A673 (cell line): ENCODE measurements at regions of chr1 and their contacts with region 1.

Region 1: DNA sequence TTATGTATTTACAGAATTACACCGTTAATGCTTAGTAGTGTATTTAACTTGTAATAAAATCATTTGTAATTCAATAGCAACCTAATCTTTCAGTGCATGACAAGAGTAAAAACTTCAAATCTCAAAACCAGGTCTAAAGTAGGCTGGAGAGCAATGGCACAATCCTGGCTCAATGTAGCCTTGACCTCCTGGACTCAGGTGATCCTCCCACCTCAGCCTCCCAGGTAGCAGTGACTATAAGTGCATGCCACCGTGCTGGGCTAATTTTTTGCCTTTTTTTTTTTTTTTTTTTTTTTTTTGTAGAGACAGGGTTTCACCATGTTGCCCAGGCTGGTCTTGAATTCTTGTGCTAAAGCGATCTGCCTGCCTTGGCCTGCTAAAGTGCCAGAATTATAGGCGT is 11.3 kb downstream of the IPP start:
- DNase-seq: no peak
- H3K4me3 ChIP-seq: no peak overlapping the region
- H3K27ac ChIP-seq: no peak overlapping the region
- H3K4me1 ChIP-seq: no peaks in the 10 kb centered on the region
- H3K27me3 ChIP-seq: no peaks in the 10 kb centered on the region
- CTCF ChIP-seq: no peak

Region 2: DNA sequence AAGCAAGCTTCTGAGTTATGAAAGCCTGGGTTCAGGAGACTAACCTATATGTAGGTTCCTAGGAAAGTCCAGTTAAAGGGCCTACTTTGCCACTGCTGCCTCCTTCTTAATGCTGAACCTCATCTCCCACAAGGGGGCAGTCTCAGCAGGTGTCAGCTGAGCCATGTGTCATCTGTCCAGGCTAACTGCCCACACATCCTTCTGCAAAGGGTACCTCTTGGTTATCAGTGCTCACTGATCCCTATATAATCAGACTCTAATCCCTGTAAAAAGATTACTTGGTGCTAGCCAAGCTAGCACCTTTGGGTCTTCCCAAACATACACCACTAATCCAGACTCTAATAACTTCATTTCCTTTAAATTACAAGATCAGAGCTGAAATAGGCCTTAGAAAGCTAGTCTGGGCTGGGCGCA is 226.5 kb before region 1 on chr1:
- CTCF ChIA-PET with region 1: no interaction called
- POLR2A ChIA-PET with region 1: no interaction called
- intact Hi-C with region 1: no loop called
- DNase-seq: peak; percentile 63
- H3K4me3 ChIP-seq: no peak overlapping the region
- H3K27ac ChIP-seq: no peak overlapping the region
- H3K4me1 ChIP-seq: peaks cover 12% of the 10 kb centered on the region
- H3K27me3 ChIP-seq: no peaks in the 10 kb centered on the region
- CTCF ChIP-seq: peak; percentile 78

Region 3: GRCh38 chr1:45620588-45621500 is 118.3 kb before region 1 on chr1:
- CTCF ChIA-PET with region 1: no interaction called
- POLR2A ChIA-PET with region 1: no interaction called
- intact Hi-C with region 1: no loop called
- DNase-seq: no peak
- H3K4me3 ChIP-seq: no peak overlapping the region
- H3K27ac ChIP-seq: no peak overlapping the region
- H3K4me1 ChIP-seq: no peaks in the 10 kb centered on the region
- H3K27me3 ChIP-seq: no peaks in the 10 kb centered on the region
- CTCF ChIP-seq: no peak

Region 4: DNA sequence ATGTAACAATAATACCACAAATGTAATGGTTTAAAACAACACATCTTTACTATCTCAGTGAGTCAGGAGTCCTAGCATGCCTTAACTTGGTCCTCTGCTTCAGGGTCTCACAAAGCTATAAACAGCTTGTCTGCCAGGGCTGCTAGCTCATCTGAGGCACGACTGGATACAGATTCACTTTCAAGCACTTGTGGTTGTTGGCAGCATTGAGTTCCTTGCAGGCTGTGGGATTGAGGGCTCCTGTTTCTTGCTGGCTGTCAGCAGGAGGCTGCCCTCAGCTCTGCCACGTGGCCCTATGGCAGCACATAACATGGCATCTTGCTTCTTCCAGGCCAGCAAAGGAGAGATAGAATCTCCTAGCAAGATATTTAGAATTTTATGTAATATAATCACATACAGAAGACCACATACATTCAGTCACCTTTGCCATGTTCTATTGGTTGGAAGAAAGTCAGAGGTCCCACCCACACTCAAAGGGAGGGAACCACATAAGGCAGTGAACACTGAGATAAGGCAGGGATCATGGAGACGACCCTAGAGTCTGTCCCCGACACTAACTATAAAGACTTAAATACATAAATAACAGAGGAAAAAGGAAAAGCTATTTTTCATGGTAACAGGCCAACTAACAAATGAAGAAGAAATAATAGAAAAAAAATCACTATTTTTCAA is 30.3 kb after region 1 on chr1:
- CTCF ChIA-PET with region 1: no interaction called
- POLR2A ChIA-PET with region 1: interaction called, 11 read pairs
- intact Hi-C with region 1: no loop called
- DNase-seq: no peak
- H3K4me3 ChIP-seq: no peak overlapping the region
- H3K27ac ChIP-seq: no peak overlapping the region
- H3K4me1 ChIP-seq: no peaks in the 10 kb centered on the region
- H3K27me3 ChIP-seq: no peaks in the 10 kb centered on the region
- CTCF ChIP-seq: no peak

Region 5: DNA sequence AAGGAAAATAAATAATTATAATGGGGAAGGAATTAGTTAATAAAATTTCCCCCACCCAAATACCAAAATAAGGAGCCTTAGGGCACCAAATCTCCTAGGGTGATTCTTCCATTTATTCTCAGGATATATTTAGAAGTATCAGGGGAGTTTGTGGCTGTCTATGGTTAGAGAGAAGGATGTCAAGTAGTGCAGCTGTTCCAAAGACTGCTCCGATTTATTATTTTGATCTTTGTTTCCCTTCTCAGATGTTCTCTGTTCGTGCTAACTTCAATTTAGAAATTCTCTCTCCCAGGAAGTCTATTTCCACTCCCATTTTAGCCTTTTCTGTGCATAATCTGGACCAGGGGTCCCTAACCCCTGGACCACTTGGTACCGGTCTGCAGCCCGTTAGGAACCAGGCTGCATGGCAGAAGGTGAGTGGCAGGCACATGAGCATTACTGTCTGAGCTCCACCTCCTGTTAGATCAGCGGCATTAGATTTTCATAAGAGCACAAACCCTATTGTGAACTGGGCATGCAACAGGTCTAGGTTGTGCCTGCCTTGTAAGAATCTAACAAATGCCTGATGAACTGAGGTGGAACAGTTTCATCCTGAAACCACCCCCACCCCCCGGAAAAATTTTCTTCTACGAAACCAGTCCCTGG is 54.9 kb after region 1 on chr1:
- CTCF ChIA-PET with region 1: no interaction called
- POLR2A ChIA-PET with region 1: no interaction called
- intact Hi-C with region 1: no loop called
- DNase-seq: no peak
- H3K4me3 ChIP-seq: no peak overlapping the region
- H3K27ac ChIP-seq: no peak overlapping the region
- H3K4me1 ChIP-seq: peaks cover 16% of the 10 kb centered on the region
- H3K27me3 ChIP-seq: no peaks in the 10 kb centered on the region
- CTCF ChIP-seq: no peak